ENCODE measurements at regions of chr18 and their contacts with region 1.

Region 1: GRCh38 chr18:24362758-24363157 is 34.9 kb downstream of the OSBPL1A start:
- DNase-seq: peak; percentile 67
- ATAC-seq: peak; percentile 78
- H3K4me3 ChIP-seq: no peak overlapping the region
- H3K27ac ChIP-seq: no peak overlapping the region
- H3K4me1 ChIP-seq: peaks cover 13% of the 10 kb centered on the region
- H3K27me3 ChIP-seq: no peaks in the 10 kb centered on the region
- CTCF ChIP-seq: no peak

Region 2: GRCh38 chr18:23805898-23806297 is 556.9 kb before region 1 on chr18:
- CTCF ChIA-PET with region 1: no interaction called
- POLR2A ChIA-PET with region 1: no interaction called
- intact Hi-C with region 1: no loop called
- DNase-seq: peak; percentile 41
- ATAC-seq: peak; percentile 42
- H3K4me3 ChIP-seq: no peak overlapping the region
- H3K27ac ChIP-seq: no peak overlapping the region
- H3K4me1 ChIP-seq: no peaks in the 10 kb centered on the region
- H3K27me3 ChIP-seq: no peaks in the 10 kb centered on the region
- CTCF ChIP-seq: no peak

Region 3: DNA sequence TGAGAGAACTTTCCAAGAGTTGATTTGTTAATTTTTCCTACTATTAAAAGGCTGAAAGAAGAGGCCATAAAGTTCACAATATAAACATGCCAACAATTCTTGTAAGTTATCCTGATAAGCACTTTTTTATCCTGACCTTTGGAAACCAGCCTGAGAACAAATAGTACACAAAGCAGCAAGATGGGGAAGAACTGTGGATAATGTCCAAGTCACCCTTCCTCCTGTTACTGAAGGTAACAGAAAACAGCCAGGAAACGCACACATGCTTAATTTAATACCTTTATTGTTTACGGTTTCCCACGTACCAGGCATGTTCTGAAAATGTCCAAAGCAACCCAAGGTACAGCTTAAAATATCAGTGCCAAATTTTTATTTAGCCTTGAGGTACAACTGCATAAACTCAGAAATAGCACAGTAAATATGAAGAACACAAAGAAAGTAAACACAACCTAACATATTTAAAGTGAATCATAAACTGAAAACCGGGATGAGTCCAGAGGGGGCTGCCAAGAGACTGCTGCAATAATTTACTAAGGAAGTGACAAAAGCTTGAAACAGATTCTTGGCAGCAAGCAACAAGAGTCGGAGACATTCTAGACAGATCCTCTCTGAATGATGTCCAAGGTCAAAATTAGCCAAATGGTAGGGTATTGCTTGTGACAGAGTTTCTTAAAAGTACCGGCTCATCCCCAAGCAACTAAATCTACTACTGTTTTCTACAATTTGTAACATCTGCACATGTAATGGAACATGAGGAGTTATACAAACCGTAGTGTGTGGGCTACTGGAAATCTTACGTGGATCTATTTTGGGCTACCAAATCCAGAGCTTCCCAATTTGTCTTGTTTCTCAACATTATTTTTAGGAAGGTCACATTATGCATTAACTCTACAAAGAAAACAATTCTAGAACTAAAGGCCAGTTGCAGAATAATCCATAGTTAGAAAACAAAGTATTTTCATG is 130.7 kb before region 1 on chr18:
- CTCF ChIA-PET with region 1: no interaction called
- POLR2A ChIA-PET with region 1: interaction called, 5 read pairs
- intact Hi-C with region 1: loop called (anchors 5 kb)
- DNase-seq: peak; percentile 86
- ATAC-seq: peak; percentile 74
- H3K4me3 ChIP-seq: peak overlapping the region; percentile 6; the same call in 1 of the 2 replicates
- H3K27ac ChIP-seq: peak overlapping the region; percentile 84
- H3K4me1 ChIP-seq: peaks cover 53% of the 10 kb centered on the region
- H3K27me3 ChIP-seq: no peaks in the 10 kb centered on the region
- CTCF ChIP-seq: no peak

Region 4: GRCh38 chr18:24413148-24413547 is 50.4 kb after region 1 on chr18:
- CTCF ChIA-PET with region 1: interaction called, 3 read pairs
- POLR2A ChIA-PET with region 1: no interaction called
- intact Hi-C with region 1: loop called (anchors 1 kb)
- DNase-seq: peak; percentile 25
- ATAC-seq: peak; percentile 57
- H3K4me3 ChIP-seq: no peak overlapping the region
- H3K27ac ChIP-seq: no peak overlapping the region
- H3K4me1 ChIP-seq: no peaks in the 10 kb centered on the region
- H3K27me3 ChIP-seq: no peaks in the 10 kb centered on the region
- CTCF ChIP-seq: peak; percentile 49; the same call in 1 of the 2 replicates

Region 5: DNA sequence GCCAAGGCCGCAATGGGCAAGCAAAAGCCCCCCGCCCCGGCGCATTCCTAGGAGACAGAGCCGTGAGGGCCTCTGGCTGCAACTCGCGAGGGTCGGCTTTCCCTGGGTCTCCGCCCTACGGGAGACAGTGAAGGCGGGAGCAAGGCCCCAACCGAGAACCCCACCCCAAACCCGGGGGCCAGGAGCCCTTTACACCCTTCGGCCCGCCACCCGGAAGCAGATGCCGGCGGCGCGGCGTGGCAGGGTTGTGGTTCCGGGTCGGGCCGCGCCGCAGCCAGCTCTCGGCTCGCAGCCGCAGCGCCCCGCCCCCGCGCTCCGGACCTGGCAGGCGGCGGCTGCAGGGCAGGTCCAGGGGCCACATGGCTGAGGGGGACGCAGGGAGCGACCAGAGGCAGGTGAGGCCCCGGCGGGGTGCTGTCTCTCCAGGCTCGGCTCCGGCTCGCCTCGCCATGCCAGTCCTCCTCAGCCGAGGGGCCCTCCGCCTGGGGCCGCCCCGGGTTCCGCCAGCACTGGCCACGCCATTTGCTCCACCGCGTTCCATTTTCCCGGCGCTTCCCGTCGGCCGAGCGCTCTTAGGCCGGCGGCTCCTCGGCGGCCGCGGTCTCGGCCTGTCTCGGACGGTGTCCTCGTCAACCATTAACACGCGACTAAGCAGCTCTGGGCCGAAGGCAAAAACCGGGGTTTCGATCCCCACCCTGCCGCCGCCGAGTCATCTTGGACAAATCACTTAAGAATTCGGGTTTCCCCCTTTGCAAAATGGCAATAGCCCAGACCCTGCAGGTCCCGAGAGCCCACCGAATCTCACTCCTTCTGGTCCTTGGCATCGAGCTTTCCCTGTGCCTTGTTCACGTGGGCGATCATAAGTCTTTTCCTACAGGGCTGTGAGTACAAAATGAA is 63.9 kb after region 1 on chr18 and contains the start of gene IMPACT:
- CTCF ChIA-PET with region 1: interaction called, 4 read pairs
- POLR2A ChIA-PET with region 1: no interaction called
- intact Hi-C with region 1: loop called (anchors 5 kb)
- DNase-seq: peak; percentile 82
- ATAC-seq: peak; percentile 92
- H3K4me3 ChIP-seq: peak within 1 kb of the TSS; percentile 97
- H3K27ac ChIP-seq: peak within 1 kb of the TSS; percentile 69
- H3K4me1 ChIP-seq: peaks cover 25% of the 10 kb centered on the region
- H3K27me3 ChIP-seq: no peaks in the 10 kb centered on the region
- CTCF ChIP-seq: no peak
- total RNA-seq, gene IMPACT: 18.8 and 19.9 TPM in 2 replicates

Region 6: GRCh38 chr18:24488824-24489493 is 126.2 kb after region 1 on chr18:
- CTCF ChIA-PET with region 1: interaction called, 17 read pairs
- POLR2A ChIA-PET with region 1: no interaction called
- intact Hi-C with region 1: loop called (anchors 1 kb)
- DNase-seq: peak; percentile 74
- ATAC-seq: 0 out of 2 replicates have a peak, but pooled peaks have one; percentile 24
- H3K4me3 ChIP-seq: no peak overlapping the region
- H3K27ac ChIP-seq: no peak overlapping the region
- H3K4me1 ChIP-seq: peaks cover 3% of the 10 kb centered on the region; the same call in 1 of the 2 replicates
- H3K27me3 ChIP-seq: peaks cover 10% of the 10 kb centered on the region
- CTCF ChIP-seq: peak; percentile 84

Measured in PC-3 (cell line).